Activated naive CD8-positive, alpha-beta T cell treated with anti-CD3 and anti-CD28 coated beads, Interleukin-2, amount 10 ng/mL, durations not matched to agents 7 days and 5 days (primary cell): ENCODE measurements at regions of chr21 and their contacts with region 1.

Region 1: GRCh38 chr21:43659136-43660000 is at the starts of genes HSF2BP and RRP1B:
- DNase-seq: peak; percentile 93
- ATAC-seq: peak; percentile 91
- H3K4me3 Mint-ChIP-seq: peak within 1 kb of the TSS; percentile 87
- H3K27ac Mint-ChIP-seq: peak within 1 kb of the TSS; percentile 89
- H3K4me1 Mint-ChIP-seq: peaks cover 23% of the 10 kb centered on the region
- H3K27me3 Mint-ChIP-seq: no peaks in the 10 kb centered on the region
- total RNA-seq, gene HSF2BP: 0.31 to 0.64 TPM
- total RNA-seq, gene RRP1B: 44.2 to 46.6 TPM

Region 2: GRCh38 chr21:43679951-43680350 is 20.6 kb after region 1 on chr21:
- POLR2A ChIA-PET with region 1: no interaction called
- DNase-seq: no peak
- ATAC-seq: no peak
- H3K4me3 Mint-ChIP-seq: no peak overlapping the region
- H3K27ac Mint-ChIP-seq: no peak overlapping the region
- H3K4me1 Mint-ChIP-seq: peaks cover 16% of the 10 kb centered on the region
- H3K27me3 Mint-ChIP-seq: no peaks in the 10 kb centered on the region

Region 3: GRCh38 chr21:43718872-43719747 is 59.7 kb after region 1 on chr21 and contains the start of gene PDXK:
- POLR2A ChIA-PET with region 1: interaction called, 12 read pairs
- DNase-seq: peak; percentile 92
- ATAC-seq: peak; percentile 80
- H3K4me3 Mint-ChIP-seq: peak within 1 kb of the TSS; percentile 87
- H3K27ac Mint-ChIP-seq: peak within 1 kb of the TSS; percentile 74
- H3K4me1 Mint-ChIP-seq: peaks cover 23% of the 10 kb centered on the region
- H3K27me3 Mint-ChIP-seq: peaks cover 20% of the 10 kb centered on the region
- total RNA-seq, gene PDXK: 96.9 to 101 TPM

Region 4: DNA sequence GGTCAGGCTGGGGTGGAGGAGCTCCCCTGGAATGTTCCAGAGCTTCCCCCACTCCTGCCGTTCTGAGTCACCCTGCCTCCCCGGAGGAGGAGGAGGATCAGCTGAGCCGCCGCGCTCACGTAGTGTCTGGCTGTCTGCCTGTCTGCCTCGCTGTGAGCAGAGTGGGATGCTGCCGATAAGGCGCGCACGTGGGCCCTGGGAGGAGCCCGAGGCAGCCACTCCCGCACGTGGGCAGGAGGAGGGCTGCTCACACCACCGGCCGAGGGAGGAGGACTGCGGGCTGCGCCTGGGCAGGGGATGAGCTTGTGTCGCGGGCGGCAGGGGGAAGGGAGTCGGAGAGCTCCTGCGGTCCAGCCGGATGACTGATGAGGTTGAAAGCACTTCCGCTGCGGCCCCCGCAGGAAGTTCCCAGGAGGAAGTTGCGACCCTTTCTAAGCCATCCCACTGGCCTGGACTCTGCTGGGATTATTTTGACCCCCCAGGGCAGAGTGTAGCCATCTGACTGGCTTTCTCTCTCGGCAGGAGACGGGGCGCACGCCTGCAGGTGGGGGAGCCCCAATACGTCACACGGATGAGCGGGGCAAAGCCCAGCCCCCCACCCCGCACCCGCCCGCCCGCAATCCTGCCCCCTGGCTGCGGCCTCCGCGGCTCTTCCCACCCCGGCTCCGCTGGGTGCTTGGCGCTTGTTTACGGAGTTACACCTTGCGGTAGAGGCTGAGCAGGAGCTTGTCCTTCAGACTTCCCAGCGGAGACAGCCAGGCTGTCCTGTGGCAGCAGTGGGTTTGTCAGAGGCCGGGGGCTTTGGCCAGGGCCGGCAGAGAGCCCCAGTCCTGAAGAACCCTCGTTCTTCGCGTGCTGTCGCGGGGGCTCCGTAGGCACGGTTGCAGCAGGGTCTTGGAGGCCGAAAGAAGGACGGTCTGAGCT is 69.4 kb after region 1 on chr21:
- POLR2A ChIA-PET with region 1: interaction called, 13 read pairs
- DNase-seq: peak; percentile 82
- ATAC-seq: peak; percentile 89
- H3K4me3 Mint-ChIP-seq: peak overlapping the region; percentile 81
- H3K27ac Mint-ChIP-seq: peak overlapping the region; percentile 76
- H3K4me1 Mint-ChIP-seq: peaks cover 48% of the 10 kb centered on the region
- H3K27me3 Mint-ChIP-seq: no peaks in the 10 kb centered on the region